ENCODE measurements at regions of chr11 and their contacts with region 1.

Region 1: DNA sequence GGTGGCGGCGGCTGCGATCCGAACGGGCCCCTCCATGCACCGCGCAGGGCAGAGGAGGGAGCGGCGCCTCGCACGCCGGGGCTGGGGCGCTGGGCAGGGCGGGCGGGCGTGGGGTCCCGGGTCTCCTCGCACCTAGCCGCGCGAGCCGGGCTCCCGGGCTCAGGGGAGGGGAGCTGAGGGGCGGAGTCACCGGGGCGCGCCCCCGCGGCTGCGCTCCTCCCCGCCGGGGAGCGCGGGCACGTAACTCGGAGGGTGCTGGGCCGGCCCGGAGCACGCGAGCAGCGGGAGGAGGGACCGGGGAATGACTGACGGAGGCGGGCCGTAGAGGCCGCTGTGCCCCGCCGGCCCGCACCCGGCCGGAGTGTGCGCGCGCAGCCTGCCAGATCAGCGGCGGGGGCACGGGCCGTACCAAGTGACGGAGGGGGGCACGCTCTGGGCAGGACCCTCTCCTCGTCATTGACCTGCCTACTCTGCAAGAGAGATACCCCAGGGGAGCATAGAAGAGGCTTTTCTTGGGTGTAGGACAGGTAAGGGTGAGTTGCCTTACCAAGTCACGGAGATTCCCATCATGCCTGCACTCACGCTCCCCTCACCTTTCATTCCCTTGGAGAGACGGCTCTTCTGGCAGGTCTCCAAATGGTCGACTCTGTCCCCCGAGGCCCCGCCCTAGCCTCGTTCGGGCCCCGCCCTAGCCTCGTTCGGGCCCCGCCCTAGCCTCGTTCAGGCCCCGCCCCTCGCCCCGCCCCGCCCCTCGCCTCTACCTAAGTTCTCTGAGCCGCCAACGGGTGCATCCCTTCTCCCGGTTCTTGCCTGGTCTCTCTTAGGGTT is at the start of gene CDON:
- DNase-seq: peak; percentile 80 to 92
- H3K4me3 ChIP-seq: peak within 1 kb of the TSS; percentile 63
- H3K27ac ChIP-seq: peak within 1 kb of the TSS; percentile 89
- H3K4me1 ChIP-seq: peaks cover 16% of the 10 kb centered on the region; the same call in 1 of the 2 replicates
- H3K27me3 ChIP-seq: no peaks in the 10 kb centered on the region
- CTCF ChIP-seq: no peak
- total RNA-seq, gene CDON: 10.0 and 11.2 TPM in 2 replicates

Region 2: GRCh38 chr11:125923012-125923579 is 139.8 kb before region 1 on chr11:
- CTCF ChIA-PET with region 1: interaction called, 4 read pairs
- POLR2A ChIA-PET with region 1: no interaction called
- intact Hi-C with region 1: loop called (anchors 1 kb)
- DNase-seq: peak; percentile 60 to 61
- H3K4me3 ChIP-seq: no peak overlapping the region
- H3K27ac ChIP-seq: no peak overlapping the region
- H3K4me1 ChIP-seq: no peaks in the 10 kb centered on the region
- H3K27me3 ChIP-seq: peaks cover 21% of the 10 kb centered on the region
- CTCF ChIP-seq: peak; percentile 84

Region 3: GRCh38 chr11:125941619-125942611 is 121.0 kb before region 1 on chr11:
- CTCF ChIA-PET with region 1: no interaction called
- POLR2A ChIA-PET with region 1: no interaction called
- intact Hi-C with region 1: loop called (anchors 5 kb)
- DNase-seq: peak in 1 of 2 experiments; percentile 51
- H3K4me3 ChIP-seq: no peak overlapping the region
- H3K27ac ChIP-seq: no peak overlapping the region
- H3K4me1 ChIP-seq: no peaks in the 10 kb centered on the region
- H3K27me3 ChIP-seq: no peaks in the 10 kb centered on the region
- CTCF ChIP-seq: peak; percentile 81

Region 4: GRCh38 chr11:126048198-126048597 is 14.7 kb before region 1 on chr11:
- CTCF ChIA-PET with region 1: no interaction called
- POLR2A ChIA-PET with region 1: interaction called, 10 read pairs
- intact Hi-C with region 1: no loop called
- DNase-seq: no peak
- H3K4me3 ChIP-seq: no peak overlapping the region
- H3K27ac ChIP-seq: no peak overlapping the region
- H3K4me1 ChIP-seq: no peaks in the 10 kb centered on the region
- H3K27me3 ChIP-seq: no peaks in the 10 kb centered on the region
- CTCF ChIP-seq: no peak

Region 5: DNA sequence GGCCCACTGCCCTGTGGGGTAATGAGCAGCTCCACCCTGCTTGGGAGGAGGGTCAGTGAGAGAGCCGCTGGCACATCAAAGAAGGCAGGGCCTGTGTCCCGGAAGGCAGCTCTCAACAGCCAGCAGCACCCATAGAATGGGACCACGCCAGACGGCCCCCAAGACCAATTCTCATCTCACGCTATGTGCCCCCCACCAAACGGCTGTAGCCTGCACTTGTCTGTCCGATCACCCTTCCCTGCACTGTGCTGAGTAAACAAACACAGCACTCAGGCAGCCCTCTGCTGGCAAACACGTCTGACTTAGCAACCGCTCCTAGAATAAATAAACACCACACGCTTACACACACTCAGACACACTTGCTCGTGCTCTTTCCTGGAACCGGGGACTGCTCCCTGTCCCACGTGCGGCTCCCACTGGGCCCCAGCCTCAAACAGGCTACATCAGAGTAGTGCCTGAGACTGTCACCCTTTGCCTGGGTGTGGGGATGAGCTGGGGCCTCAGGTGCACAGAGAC is 53.0 kb after region 1 on chr11:
- CTCF ChIA-PET with region 1: interaction called, 3 read pairs
- POLR2A ChIA-PET with region 1: interaction called, 5 read pairs
- intact Hi-C with region 1: loop called (anchors 2 kb)
- DNase-seq: peak; percentile 43 to 75
- H3K4me3 ChIP-seq: no peak overlapping the region
- H3K27ac ChIP-seq: no peak overlapping the region
- H3K4me1 ChIP-seq: peaks cover 34% of the 10 kb centered on the region
- H3K27me3 ChIP-seq: no peaks in the 10 kb centered on the region
- CTCF ChIP-seq: no peak; the same call in 1 of the 2 replicates

Region 6: DNA sequence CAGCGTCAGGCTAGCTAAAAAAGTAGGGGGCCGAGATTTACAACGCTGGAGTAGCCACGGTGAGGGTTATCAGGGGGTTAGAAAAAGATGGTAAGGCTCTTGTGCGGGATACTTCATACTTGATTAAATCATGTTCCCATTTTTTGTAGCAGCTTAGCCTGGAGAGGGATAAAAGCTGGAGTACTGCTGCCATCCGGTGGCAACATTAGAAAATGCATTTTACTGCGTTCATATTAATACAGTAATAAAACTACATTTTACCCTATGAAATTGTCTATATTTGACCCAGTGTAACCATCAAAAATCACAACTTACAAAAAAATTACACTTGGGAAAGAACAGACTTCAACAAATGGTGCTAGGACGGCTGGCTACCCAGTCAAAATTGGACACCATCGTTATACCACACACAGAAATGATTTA is 131.2 kb after region 1 on chr11:
- CTCF ChIA-PET with region 1: interaction called, 5 read pairs
- POLR2A ChIA-PET with region 1: no interaction called
- intact Hi-C with region 1: loop called (anchors 1 kb)
- DNase-seq: peak in 1 of 2 experiments; percentile 48
- H3K4me3 ChIP-seq: no peak overlapping the region
- H3K27ac ChIP-seq: no peak overlapping the region
- H3K4me1 ChIP-seq: no peaks in the 10 kb centered on the region
- H3K27me3 ChIP-seq: no peaks in the 10 kb centered on the region
- CTCF ChIP-seq: peak; percentile 87